ENCODE measurements at regions of chr11 and their contacts with region 1.

Region 1: GRCh38 chr11:107301886-107302285 is 155.7 kb downstream of the CWF19L2 start:
- DNase-seq: peak; percentile 54
- H3K4me3 ChIP-seq: no peak overlapping the region
- H3K27ac ChIP-seq: no peak overlapping the region
- H3K4me1 ChIP-seq: peaks cover 5% of the 10 kb centered on the region
- H3K27me3 ChIP-seq: no peaks in the 10 kb centered on the region
- CTCF ChIP-seq: no peak
- POLR2A ChIP-seq: no peak

Region 2: DNA sequence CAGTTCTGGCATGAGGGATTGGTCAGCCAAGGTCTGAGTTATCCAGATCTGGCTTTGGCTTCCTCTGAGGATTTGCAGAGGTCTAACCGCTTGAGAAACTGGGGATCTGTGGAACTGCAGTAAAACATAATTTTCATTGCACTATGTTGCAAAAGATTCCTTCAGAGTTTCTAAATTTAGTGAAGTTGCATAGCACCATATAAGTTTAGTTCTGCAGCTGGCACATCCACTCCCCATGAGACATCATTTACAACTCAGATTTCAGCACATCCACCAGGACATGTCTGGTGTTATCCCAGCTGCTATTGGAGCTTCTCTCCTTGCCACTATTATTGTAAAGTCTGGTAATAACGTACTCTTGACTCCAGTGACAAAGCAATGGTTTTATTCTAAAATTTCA is 25.8 kb before region 1 on chr11:
- CTCF ChIA-PET with region 1: no interaction called
- POLR2A ChIA-PET with region 1: no interaction called
- dilution Hi-C with region 1: no loop called
- intact Hi-C with region 1: loop called (anchors 1 kb)
- DNase-seq: no peak
- H3K4me3 ChIP-seq: no peak overlapping the region
- H3K27ac ChIP-seq: no peak overlapping the region
- H3K4me1 ChIP-seq: no peaks in the 10 kb centered on the region
- H3K27me3 ChIP-seq: no peaks in the 10 kb centered on the region
- CTCF ChIP-seq: no peak
- POLR2A ChIP-seq: no peak

Measured in endothelial cell of umbilical vein (primary cell).